HEK293 (cell line): ENCODE measurements at regions of chr1 and their contacts with region 1.

Region 1: DNA sequence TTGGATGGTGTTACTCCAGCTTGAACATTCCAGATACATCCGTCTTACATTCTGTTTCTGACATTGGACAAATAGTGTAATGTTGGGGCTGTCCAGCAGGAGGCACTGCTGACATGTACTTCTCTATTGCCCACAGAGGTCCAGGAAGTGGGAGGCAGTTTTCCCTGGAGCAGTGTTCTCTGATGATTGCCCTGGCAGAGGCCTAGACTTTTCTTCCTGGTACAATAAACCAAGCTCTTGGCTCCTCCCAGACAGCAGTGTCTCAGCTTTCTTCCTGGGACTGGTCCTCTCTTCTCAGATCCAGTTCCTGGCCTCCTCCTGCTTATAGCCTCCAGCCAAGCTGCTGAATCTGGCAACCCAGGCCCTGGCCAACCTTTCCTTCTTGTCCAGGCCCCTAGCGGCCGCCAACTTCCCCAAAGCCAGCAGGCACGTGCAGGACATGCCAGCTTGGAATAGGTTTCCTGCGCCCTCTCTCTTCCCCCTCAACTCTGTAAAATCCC is 14.9 kb upstream of the IFNLR1 start:
- H3K4me3 ChIP-seq: no peak overlapping the region
- H3K27ac ChIP-seq: no peak overlapping the region
- H3K4me1 ChIP-seq: no peaks in the 10 kb centered on the region
- CTCF ChIP-seq: peak; percentile 62; the same call in 1 of the 2 replicates

Region 2: DNA sequence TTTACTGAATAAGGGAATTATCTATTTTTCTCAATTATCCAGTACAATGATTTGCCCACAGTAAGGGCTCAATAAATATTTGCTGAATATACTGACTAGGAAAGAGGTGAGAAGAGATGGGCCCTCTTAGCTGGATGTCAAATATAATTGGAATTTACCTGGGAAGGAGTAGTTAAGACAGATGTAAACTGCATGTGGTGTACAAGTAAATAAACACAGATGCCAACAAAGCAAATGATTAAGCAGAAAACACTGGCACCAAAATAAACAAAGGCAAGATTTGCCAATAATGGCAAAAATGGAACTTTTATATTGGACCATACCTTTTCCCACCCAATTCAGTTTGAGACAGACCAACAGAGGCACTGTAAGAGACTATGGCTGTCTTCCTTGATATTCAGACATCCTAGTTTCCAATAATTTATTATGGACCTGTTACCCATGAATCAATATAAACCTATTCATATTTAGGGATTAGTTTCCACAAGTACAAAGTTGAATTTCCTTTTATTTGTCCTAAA is 235.0 kb before region 1 on chr1:
- CTCF ChIA-PET with region 1: no interaction called
- POLR2A ChIA-PET with region 1: no interaction called
- H3K4me3 ChIP-seq: no peak overlapping the region
- H3K27ac ChIP-seq: no peak overlapping the region
- H3K4me1 ChIP-seq: no peaks in the 10 kb centered on the region
- CTCF ChIP-seq: no peak

Region 3: DNA sequence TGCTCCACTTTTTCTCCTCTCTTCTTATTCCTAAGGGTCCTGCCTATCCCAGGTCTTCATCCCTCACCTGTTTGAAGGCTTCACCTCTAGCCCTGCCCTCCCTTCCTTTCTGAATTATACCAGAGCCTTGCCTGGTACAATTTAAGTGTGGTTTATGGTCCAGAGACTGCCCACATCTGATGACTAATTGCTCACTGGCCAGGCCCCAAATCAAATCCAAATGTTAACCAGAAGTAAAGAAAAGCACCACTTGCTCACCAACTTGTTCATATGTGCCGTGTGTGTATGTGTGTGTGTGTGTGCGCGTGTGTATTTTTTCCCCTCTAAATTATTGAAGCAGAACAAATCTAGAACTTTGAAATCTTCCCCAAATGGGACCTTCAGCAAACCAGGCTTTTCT is 116.4 kb before region 1 on chr1:
- CTCF ChIA-PET with region 1: no interaction called
- POLR2A ChIA-PET with region 1: no interaction called
- H3K4me3 ChIP-seq: no peak overlapping the region
- H3K27ac ChIP-seq: no peak overlapping the region
- H3K4me1 ChIP-seq: no peaks in the 10 kb centered on the region
- CTCF ChIP-seq: no peak

Region 4: GRCh38 chr1:24150234-24151174 is 51.5 kb before region 1 on chr1:
- CTCF ChIA-PET with region 1: interaction called, 36 read pairs
- POLR2A ChIA-PET with region 1: no interaction called
- H3K4me3 ChIP-seq: no peak overlapping the region
- H3K27ac ChIP-seq: no peak overlapping the region
- H3K4me1 ChIP-seq: no peaks in the 10 kb centered on the region
- CTCF ChIP-seq: peak; percentile 92

Region 5: DNA sequence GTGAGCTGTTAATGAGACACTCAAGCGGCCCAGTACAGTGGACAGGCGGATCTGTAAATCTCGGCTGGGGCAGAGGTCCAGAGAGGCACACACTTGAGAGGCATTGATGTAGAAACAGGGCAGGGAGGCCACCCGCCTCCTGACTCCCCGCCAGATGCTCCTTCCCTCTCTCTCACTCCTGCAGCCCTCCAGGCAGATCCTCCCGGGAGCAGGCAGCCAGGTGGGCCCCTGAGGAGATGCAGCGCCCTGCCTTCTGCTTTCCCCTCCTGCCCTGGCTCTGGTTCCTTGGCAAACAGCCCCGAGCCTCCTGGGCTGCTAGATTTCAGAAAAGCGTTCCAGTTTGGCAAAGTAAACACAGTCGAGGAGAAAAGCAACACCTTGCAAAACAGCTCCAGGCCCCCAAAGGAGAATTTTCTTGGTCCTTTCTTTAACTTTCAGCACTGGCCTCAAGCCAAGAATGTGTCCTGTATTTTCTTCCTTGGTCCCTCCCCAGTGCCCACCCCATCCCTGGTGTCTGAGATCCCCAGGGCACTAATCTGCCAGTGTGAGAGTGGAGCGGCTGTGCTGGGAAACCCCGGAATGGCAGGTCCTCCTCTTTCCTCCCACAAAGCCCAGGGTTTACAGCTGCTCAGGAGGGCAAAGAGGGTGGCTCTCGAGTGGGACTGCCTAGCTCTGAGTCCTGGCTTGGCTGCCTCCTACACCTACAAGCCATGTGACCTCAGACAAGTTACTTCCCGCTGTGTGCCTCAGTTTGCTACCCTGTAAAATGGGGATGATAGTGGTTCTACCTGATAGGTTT is 14.5 kb after region 1 on chr1:
- CTCF ChIA-PET with region 1: interaction called, 17 read pairs
- POLR2A ChIA-PET with region 1: no interaction called
- H3K4me3 ChIP-seq: no peak overlapping the region
- H3K27ac ChIP-seq: no peak overlapping the region
- H3K4me1 ChIP-seq: peaks cover 6% of the 10 kb centered on the region; the same call in 1 of the 2 replicates
- CTCF ChIP-seq: no peak

Region 6: DNA sequence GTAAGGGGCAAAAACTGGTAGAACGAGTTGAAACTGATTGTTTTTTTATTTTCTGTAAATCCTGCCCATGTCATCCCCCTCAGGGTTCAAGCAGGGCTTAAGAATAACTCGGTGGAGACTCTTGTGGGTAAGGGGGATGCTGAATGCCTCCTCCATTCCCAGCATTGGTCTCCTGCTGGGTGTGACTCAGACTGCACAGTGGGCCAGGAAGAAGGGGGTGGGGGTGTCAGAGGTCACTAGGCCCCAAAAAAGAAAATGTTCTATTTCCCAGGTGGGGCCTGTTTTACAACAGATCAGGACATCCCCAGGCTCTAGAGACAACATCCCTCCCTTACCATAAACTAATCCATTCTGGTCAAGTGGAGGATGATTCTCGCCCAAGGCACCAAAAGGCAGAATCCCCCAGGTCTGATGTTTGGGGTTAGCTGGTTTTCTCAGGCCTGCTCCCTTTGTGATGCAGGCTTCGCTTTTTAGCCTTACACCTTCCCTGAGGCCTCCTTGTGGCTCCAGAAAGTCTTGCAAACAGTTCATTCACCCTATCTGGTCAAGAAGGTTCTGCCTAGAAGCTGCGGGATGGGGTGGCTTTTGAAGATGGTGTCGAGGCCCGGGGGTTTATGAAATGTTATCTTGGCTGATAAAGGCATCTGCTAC is 106.5 kb after region 1 on chr1:
- CTCF ChIA-PET with region 1: interaction called, 11 read pairs
- POLR2A ChIA-PET with region 1: no interaction called
- H3K4me3 ChIP-seq: no peak overlapping the region
- H3K27ac ChIP-seq: no peak overlapping the region
- H3K4me1 ChIP-seq: no peaks in the 10 kb centered on the region
- CTCF ChIP-seq: no peak

Region 7: GRCh38 chr1:24329797-24330543 is 128.0 kb after region 1 on chr1:
- CTCF ChIA-PET with region 1: interaction called, 14 read pairs
- POLR2A ChIA-PET with region 1: no interaction called
- H3K4me3 ChIP-seq: no peak overlapping the region
- H3K27ac ChIP-seq: no peak overlapping the region
- H3K4me1 ChIP-seq: no peaks in the 10 kb centered on the region; the same call in 1 of the 2 replicates
- CTCF ChIP-seq: no peak

Region 8: GRCh38 chr1:24403806-24404205 is 201.8 kb after region 1 on chr1:
- CTCF ChIA-PET with region 1: interaction called, 611 read pairs
- POLR2A ChIA-PET with region 1: no interaction called
- H3K4me3 ChIP-seq: no peak overlapping the region
- H3K27ac ChIP-seq: no peak overlapping the region
- H3K4me1 ChIP-seq: no peaks in the 10 kb centered on the region; the same call in 1 of the 2 replicates
- CTCF ChIP-seq: no peak

Region 9: DNA sequence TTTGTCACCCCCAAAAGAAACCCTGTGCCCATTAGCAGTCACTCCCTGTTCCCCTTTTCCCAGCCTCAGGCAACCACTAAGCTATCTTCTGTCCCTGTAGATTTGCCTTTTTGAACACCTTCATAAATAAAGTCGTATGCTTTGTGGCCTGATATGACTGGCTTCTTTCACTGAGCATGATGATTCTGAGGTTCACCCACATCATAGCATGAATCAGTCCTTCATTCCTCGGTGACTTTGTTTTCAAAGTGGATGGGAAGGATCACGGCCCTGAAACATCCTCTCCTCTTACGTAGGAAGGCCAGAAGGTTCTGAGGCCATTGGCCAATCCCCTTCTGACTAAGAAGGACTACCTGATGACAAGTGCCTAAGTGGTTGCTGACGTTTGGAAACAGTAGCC is 252.7 kb after region 1 on chr1:
- CTCF ChIA-PET with region 1: no interaction called
- POLR2A ChIA-PET with region 1: no interaction called
- H3K4me3 ChIP-seq: no peak overlapping the region
- H3K27ac ChIP-seq: no peak overlapping the region
- H3K4me1 ChIP-seq: no peaks in the 10 kb centered on the region
- CTCF ChIP-seq: no peak

Region 10: DNA sequence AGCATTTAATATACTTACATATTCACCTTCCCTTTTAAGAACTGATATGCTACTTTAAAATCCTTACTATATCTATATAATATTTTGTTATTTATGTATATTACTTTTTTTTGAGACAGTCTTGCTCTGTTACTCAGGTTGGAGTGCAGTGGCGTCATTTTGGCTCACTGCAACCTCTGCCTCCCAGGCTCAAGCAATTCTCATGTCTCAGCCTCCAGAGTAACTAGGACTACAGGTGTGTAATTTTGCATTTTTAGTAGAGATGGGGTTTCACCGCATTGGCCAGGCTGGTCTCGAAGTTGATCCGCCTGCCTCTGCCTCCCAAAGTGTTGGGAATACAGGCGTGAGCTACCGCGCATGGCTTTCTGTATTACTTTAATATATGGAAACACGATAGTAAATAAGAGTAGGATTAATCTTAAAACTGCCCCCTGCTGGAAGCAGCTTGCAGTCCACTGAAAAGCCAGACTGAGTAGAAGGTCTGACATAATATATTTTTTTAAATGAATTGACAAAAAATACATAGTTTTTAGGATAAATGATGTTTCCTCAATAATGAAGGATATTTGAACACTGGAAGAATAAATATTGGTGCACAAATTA is 325.1 kb after region 1 on chr1:
- CTCF ChIA-PET with region 1: interaction called, 14 read pairs
- POLR2A ChIA-PET with region 1: no interaction called
- H3K4me3 ChIP-seq: no peak overlapping the region
- H3K27ac ChIP-seq: no peak overlapping the region
- H3K4me1 ChIP-seq: no peaks in the 10 kb centered on the region
- CTCF ChIP-seq: no peak

Region 11: DNA sequence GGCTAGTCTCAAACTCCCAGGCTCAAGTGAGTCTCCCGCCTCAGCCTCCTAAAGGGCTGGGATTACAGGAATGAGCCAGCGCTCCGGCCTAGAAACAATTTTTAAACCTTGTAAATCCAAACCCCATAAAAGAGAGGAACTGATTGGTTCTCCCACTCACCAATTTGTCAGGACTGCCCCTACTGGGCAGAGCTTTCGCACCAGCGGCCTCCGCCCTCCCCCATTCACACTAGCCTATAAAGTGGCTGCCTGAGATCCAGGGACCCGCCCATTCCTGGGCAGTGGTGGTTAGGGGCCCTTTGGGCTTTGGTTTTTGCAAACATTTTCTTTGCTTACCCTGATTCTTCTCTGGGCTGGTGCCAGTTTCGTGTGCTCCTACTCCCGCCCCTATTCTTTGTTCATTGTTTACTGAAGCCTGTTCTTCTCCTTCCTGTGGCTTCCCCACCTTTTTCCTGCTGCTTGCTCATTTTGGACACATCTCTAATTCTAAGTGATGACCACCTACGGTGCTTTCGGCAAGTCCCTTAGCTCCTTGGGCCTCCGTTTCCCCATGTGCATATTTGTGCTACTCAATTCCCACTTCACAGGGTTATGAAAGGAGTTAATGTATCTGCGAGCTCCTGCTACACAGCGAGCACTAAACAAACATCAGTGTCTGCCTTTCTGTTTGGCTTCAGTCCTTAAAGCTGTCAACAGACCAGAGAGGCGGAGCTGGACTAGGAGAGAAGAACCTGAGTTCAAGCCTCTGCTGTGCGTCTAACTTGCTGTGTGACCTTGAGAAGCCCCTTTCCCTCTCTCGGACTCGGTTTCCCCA is 503.5 kb after region 1 on chr1:
- CTCF ChIA-PET with region 1: no interaction called
- POLR2A ChIA-PET with region 1: no interaction called
- H3K4me3 ChIP-seq: peak overlapping the region; percentile 17; the same call in 1 of the 2 replicates
- H3K27ac ChIP-seq: peak overlapping the region; percentile 72
- H3K4me1 ChIP-seq: peaks cover 6% of the 10 kb centered on the region; the same call in 1 of the 2 replicates
- CTCF ChIP-seq: no peak